CD8-positive, alpha-beta T cell (primary cell): ENCODE measurements at regions of chr19 and their contacts with region 1.

Region 1: GRCh38 chr19:35959040-35959967 is 23.1 kb downstream of the LRFN3 start:
- DNase-seq: peak; percentile 60 to 93 (median 82)
- ATAC-seq: peak; percentile 99
- H3K4me3 ChIP-seq: peak overlapping the region; percentile 57 to 62
- H3K4me3 Mint-ChIP-seq: peak overlapping the region; percentile 70
- H3K27ac ChIP-seq: peak overlapping the region in 1 of 2 experiments; percentile 25
- H3K27ac Mint-ChIP-seq: no peak overlapping the region
- H3K4me1 ChIP-seq: peaks cover 43% of the 10 kb centered on the region
- H3K4me1 Mint-ChIP-seq: peaks cover 37% of the 10 kb centered on the region
- H3K27me3 ChIP-seq: peaks cover 0 to 4% of the 10 kb centered on the region in 2 experiments
- H3K27me3 Mint-ChIP-seq: peaks cover 4% of the 10 kb centered on the region
- CTCF ChIP-seq: peak; percentile 77

Region 2: DNA sequence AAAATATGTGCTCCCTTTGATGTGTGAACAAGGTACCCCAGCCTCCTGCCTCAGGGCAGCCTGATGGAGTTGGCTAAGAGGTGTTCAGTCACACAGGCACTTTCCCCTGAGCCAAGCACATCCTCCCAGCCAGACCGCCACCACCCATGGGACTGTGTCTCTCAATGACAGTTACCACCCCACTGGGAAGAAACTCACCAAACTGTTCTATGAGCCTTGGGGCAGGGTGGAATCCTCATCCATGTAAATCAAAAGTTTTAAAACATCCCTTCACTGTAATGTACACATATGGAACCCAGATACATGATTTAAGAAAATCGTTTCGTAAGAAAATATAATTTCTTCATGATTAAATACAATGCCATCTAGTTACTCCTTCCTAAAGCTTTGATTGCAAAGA is 1925.4 kb before region 1 on chr19:
- CTCF ChIA-PET with region 1: no interaction called
- POLR2A ChIA-PET with region 1: no interaction called
- intact Hi-C with region 1: no loop called
- DNase-seq: no peak
- ATAC-seq: no peak
- H3K4me3 ChIP-seq: no peak overlapping the region
- H3K4me3 Mint-ChIP-seq: no peak overlapping the region
- H3K27ac ChIP-seq: no peak overlapping the region
- H3K27ac Mint-ChIP-seq: no peak overlapping the region
- H3K4me1 ChIP-seq: no peaks in the 10 kb centered on the region
- H3K4me1 Mint-ChIP-seq: no peaks in the 10 kb centered on the region
- H3K27me3 ChIP-seq: no peaks in the 10 kb centered on the region
- H3K27me3 Mint-ChIP-seq: peaks cover 22% of the 10 kb centered on the region
- CTCF ChIP-seq: no peak

Region 3: DNA sequence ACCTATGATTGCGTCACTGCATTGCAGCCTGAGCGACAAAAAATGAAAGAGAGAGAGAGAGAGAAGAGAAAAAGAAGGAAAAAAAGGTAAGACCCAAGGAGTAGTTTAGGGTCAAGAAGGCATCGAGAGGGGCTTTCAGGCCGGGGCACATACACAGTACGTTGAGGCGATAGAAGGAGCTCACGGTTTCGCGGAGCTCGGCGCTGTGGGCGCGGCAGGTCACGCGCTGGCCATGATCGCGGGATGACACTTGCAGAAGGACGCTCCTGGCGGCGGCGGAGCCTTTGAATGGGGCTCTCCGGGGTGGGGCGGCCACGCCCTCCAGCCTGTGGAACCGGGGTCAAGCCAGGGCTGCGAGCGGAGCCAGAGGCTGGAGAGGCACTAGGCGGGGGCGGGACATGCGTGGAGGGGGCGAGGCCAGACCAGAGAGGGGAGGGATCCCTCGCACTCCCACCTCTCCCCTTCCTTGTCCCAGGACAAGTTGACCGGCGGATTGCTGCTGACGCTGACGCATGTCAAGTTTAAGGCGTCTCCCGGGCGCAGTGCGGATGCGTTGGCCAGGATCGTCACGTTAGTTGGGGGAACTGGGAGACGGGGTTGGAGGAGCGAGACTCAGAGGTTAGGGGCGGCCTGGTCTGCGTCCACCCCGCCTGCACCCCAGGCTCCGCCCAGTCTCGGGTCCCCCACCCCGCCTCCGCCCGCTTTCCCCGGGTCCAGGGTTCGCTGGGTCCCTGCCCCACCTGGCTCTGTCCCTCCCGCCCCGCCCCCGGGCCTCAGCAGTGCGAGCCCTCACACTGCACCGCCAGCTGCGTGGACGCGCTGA is 113.9 kb before region 1 on chr19:
- CTCF ChIA-PET with region 1: no interaction called
- POLR2A ChIA-PET with region 1: no interaction called
- intact Hi-C with region 1: no loop called
- DNase-seq: no peak
- ATAC-seq: peak; percentile 23
- H3K4me3 ChIP-seq: no peak overlapping the region
- H3K4me3 Mint-ChIP-seq: peak overlapping the region; percentile 79
- H3K27ac ChIP-seq: no peak overlapping the region
- H3K27ac Mint-ChIP-seq: no peak overlapping the region
- H3K4me1 ChIP-seq: peaks cover 7% of the 10 kb centered on the region
- H3K4me1 Mint-ChIP-seq: peaks cover 18% of the 10 kb centered on the region
- H3K27me3 ChIP-seq: peaks cover 21 to 32% of the 10 kb centered on the region in 2 experiments
- H3K27me3 Mint-ChIP-seq: peaks cover 58% of the 10 kb centered on the region
- CTCF ChIP-seq: no peak

Region 4: DNA sequence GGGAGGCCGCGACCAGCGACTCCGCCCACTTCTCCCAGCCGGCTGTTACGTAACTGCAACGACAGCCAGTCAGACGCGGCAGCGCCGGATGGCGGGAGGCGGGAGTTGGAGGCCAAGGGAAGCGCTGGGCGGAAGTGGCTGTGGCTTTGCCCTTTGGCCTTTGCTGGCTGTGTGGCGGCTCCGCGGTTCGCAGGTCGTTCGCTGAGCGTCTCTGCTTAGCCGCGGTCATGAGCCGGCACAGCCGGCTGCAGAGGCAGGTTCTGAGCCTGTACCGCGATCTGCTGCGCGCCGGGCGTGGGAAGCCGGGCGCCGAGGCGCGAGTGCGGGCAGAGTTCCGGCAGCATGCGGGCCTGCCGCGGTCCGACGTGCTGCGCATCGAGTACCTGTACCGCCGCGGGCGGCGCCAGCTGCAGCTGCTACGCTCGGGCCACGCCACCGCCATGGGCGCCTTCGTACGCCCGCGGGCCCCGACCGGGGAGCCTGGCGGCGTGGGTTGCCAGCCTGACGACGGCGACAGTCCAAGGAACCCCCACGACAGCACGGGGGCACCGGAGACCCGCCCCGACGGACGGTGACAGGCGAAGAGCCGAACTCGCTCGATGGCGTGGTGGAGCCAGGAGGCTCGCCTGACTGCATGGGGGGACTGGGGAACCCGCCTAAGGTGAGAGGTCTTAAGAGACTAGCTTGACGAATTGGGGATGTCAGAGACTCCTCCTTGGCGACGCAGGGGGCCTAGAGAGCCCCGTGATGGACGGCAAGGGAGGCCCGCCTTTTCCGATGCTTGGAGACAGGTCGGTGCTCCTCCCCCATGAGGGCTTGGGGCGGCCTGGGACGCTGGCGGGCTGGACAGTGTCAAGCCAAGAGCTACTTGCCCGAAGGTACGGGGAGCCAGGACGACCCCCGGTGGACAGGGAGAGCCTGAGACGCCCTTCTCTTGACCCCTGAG is 36.0 kb after region 1 on chr19 and contains the start of gene SDHAF1:
- CTCF ChIA-PET with region 1: interaction called, 21 read pairs
- POLR2A ChIA-PET with region 1: interaction called, 7 read pairs
- intact Hi-C with region 1: loop called in 1 of 2 experiments (anchors 2 kb)
- DNase-seq: peak; percentile 80 to 96 (median 92)
- ATAC-seq: peak; percentile 88
- H3K4me3 ChIP-seq: peak within 1 kb of the TSS; percentile 73 to 95
- H3K4me3 Mint-ChIP-seq: peak within 1 kb of the TSS; percentile 93
- H3K27ac ChIP-seq: peak within 1 kb of the TSS; percentile 55 to 69
- H3K27ac Mint-ChIP-seq: peak within 1 kb of the TSS; percentile 94
- H3K4me1 ChIP-seq: peaks cover 22% of the 10 kb centered on the region
- H3K4me1 Mint-ChIP-seq: peaks cover 35% of the 10 kb centered on the region
- H3K27me3 ChIP-seq: peaks cover 0 to 4% of the 10 kb centered on the region in 2 experiments
- H3K27me3 Mint-ChIP-seq: no peaks in the 10 kb centered on the region
- CTCF ChIP-seq: no peak
- total RNA-seq, gene SDHAF1: 7.3 TPM